ENCODE measurements at regions of chr3 and their contacts with region 1.

Region 1: DNA sequence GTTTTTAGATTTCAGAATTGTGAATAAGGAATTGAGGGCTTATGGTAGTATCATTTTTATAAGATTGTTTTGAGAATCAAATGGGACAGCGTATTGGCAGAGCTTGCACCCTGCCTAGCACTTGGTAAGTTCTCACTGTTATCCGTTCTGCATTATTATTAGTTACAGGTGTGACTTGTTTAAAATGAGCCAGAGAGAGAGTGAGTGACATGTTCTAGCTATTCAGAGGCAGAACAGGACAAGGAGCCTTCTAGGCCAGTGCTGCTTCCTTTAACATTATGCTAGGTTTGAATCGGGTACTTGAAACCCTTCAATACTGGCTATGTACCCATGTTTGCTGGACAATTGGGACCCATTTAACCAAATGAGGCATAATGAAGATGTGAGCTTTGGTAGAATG is 133.7 kb downstream of the FILIP1L start:
- DNase-seq: no peak
- H3K4me3 ChIP-seq: no peak overlapping the region
- H3K27ac ChIP-seq: no peak overlapping the region
- H3K4me1 ChIP-seq: no peaks in the 10 kb centered on the region
- H3K27me3 ChIP-seq: no peaks in the 10 kb centered on the region
- CTCF ChIP-seq: no peak
- POLR2A ChIP-seq: no peak

Region 2: DNA sequence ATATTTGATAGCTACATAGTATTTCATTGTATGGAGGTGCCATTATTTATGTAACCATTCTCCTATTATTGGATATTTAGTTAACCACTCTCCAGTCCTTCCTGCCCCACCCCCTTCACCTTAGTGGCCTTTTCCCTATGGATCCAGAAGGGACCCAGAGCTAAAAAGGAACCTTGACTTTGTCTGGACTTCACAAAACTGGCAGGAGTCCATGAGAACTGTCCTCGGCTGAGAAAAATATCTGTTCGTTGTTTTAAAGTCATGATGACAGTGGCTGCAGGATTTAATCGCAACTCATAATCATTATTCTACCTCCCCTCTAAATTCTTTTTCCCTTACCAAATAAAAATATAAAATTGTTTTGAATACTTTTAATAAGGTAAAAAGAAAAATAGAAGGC is 33.2 kb before region 1 on chr3:
- CTCF ChIA-PET with region 1: interaction called, 4 read pairs
- POLR2A ChIA-PET with region 1: no interaction called
- dilution Hi-C with region 1: no loop called
- intact Hi-C with region 1: loop called (anchors 1 kb)
- DNase-seq: no peak
- H3K4me3 ChIP-seq: no peak overlapping the region
- H3K27ac ChIP-seq: no peak overlapping the region
- H3K4me1 ChIP-seq: no peaks in the 10 kb centered on the region
- H3K27me3 ChIP-seq: no peaks in the 10 kb centered on the region
- CTCF ChIP-seq: no peak
- POLR2A ChIP-seq: no peak

Region 3: DNA sequence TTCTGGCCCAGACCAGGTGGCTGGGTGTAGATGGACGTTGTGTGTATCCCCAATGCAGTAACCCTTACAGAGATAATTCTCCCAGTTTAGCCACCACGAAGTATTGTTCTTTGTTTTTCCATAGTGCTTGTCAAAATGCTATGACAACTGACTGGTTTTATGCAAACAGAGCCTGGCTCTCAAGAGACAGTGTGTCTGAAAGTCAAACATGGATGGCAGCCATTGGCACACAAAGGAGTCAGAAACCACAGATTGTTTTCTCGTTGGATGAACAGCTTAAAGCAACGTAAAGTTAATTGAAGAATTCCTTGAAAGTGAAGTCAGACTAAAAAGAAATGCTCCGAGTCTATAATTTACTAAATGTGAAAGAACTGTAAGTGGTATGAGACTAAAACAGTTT is 42.5 kb after region 1 on chr3:
- CTCF ChIA-PET with region 1: no interaction called
- POLR2A ChIA-PET with region 1: no interaction called
- dilution Hi-C with region 1: no loop called
- intact Hi-C with region 1: no loop called
- DNase-seq: no peak
- H3K4me3 ChIP-seq: no peak overlapping the region
- H3K27ac ChIP-seq: no peak overlapping the region
- H3K4me1 ChIP-seq: peaks cover 4% of the 10 kb centered on the region
- H3K27me3 ChIP-seq: no peaks in the 10 kb centered on the region
- CTCF ChIP-seq: no peak
- POLR2A ChIP-seq: no peak